ENCODE measurements at regions of chr17 and their contacts with region 1.

Region 1: GRCh38 chr17:27502526-27503324 is 46.5 kb downstream of the KSR1 start:
- DNase-seq: no peak
- ATAC-seq: no peak
- H3K4me3 ChIP-seq: no peak overlapping the region
- H3K4me3 Mint-ChIP-seq: no peak overlapping the region
- H3K27ac ChIP-seq: no peak overlapping the region
- H3K27ac Mint-ChIP-seq: no peak overlapping the region
- H3K4me1 ChIP-seq: no peaks in the 10 kb centered on the region
- H3K4me1 Mint-ChIP-seq: peaks cover 6% of the 10 kb centered on the region
- H3K27me3 ChIP-seq: no peaks in the 10 kb centered on the region
- H3K27me3 Mint-ChIP-seq: no peaks in the 10 kb centered on the region
- CTCF ChIP-seq: no peak

Region 2: DNA sequence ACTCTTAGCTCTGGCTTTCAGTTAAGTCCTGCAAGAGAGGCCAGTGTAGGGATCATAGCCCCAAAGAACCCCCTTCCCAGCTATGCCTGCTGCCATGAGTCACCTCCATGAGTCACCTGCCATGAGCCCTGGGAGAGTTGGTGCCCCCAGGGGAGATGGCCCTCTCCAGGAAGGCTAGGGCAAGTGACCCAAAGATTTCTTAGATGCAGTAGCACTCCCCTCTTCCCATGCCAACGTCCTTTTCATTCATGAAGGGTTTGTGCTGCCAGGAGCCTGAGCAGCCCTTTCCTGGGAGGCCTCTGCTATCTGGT is 49.7 kb after region 1 on chr17:
- CTCF ChIA-PET with region 1: no interaction called
- POLR2A ChIA-PET with region 1: no interaction called
- intact Hi-C with region 1: loop called in 1 of 2 experiments (anchors 5 kb)
- DNase-seq: peak in 2 of 14 experiments; percentile 19 to 39
- ATAC-seq: no peak
- H3K4me3 ChIP-seq: no peak overlapping the region
- H3K4me3 Mint-ChIP-seq: no peak overlapping the region
- H3K27ac ChIP-seq: no peak overlapping the region
- H3K27ac Mint-ChIP-seq: no peak overlapping the region
- H3K4me1 ChIP-seq: no peaks in the 10 kb centered on the region
- H3K4me1 Mint-ChIP-seq: peaks cover 6% of the 10 kb centered on the region
- H3K27me3 ChIP-seq: no peaks in the 10 kb centered on the region
- H3K27me3 Mint-ChIP-seq: no peaks in the 10 kb centered on the region
- CTCF ChIP-seq: no peak

Measured in CD4-positive, alpha-beta T cell (primary cell).